ENCODE measurements at regions of chr19 and their contacts with region 1.

Region 1: GRCh38 chr19:38657633-38658222 is 10.3 kb downstream of the ACTN4 start:
- DNase-seq: no peak
- ATAC-seq: no peak
- H3K4me3 Mint-ChIP-seq: peak overlapping the region; percentile 11
- H3K27ac Mint-ChIP-seq: no peak overlapping the region
- H3K4me1 Mint-ChIP-seq: peaks cover 58% of the 10 kb centered on the region
- H3K27me3 Mint-ChIP-seq: no peaks in the 10 kb centered on the region

Region 2: GRCh38 chr19:38496603-38497487 is 160.9 kb before region 1 on chr19:
- POLR2A ChIA-PET with region 1: no interaction called
- DNase-seq: no peak
- ATAC-seq: no peak
- H3K4me3 Mint-ChIP-seq: no peak overlapping the region
- H3K27ac Mint-ChIP-seq: no peak overlapping the region
- H3K4me1 Mint-ChIP-seq: peaks cover 9% of the 10 kb centered on the region
- H3K27me3 Mint-ChIP-seq: peaks cover 20% of the 10 kb centered on the region

Region 3: GRCh38 chr19:38647368-38647965 is 10.3 kb before region 1 on chr19 and contains the start of gene ACTN4:
- POLR2A ChIA-PET with region 1: interaction called, 10 read pairs
- DNase-seq: peak; percentile 100
- ATAC-seq: peak; percentile 93
- H3K4me3 Mint-ChIP-seq: peak within 1 kb of the TSS; percentile 94
- H3K27ac Mint-ChIP-seq: peak within 1 kb of the TSS; percentile 87
- H3K4me1 Mint-ChIP-seq: peaks cover 28% of the 10 kb centered on the region
- H3K27me3 Mint-ChIP-seq: peaks cover 1% of the 10 kb centered on the region
- total RNA-seq, gene ACTN4: 236 to 252 TPM

Region 4: GRCh38 chr19:38669552-38669951 is 11.8 kb after region 1 on chr19:
- POLR2A ChIA-PET with region 1: interaction called, 10 read pairs
- DNase-seq: no peak
- ATAC-seq: peak; percentile 15
- H3K4me3 Mint-ChIP-seq: peak overlapping the region; percentile 49
- H3K27ac Mint-ChIP-seq: peak overlapping the region; percentile 44
- H3K4me1 Mint-ChIP-seq: peaks cover 50% of the 10 kb centered on the region
- H3K27me3 Mint-ChIP-seq: no peaks in the 10 kb centered on the region

Region 5: DNA sequence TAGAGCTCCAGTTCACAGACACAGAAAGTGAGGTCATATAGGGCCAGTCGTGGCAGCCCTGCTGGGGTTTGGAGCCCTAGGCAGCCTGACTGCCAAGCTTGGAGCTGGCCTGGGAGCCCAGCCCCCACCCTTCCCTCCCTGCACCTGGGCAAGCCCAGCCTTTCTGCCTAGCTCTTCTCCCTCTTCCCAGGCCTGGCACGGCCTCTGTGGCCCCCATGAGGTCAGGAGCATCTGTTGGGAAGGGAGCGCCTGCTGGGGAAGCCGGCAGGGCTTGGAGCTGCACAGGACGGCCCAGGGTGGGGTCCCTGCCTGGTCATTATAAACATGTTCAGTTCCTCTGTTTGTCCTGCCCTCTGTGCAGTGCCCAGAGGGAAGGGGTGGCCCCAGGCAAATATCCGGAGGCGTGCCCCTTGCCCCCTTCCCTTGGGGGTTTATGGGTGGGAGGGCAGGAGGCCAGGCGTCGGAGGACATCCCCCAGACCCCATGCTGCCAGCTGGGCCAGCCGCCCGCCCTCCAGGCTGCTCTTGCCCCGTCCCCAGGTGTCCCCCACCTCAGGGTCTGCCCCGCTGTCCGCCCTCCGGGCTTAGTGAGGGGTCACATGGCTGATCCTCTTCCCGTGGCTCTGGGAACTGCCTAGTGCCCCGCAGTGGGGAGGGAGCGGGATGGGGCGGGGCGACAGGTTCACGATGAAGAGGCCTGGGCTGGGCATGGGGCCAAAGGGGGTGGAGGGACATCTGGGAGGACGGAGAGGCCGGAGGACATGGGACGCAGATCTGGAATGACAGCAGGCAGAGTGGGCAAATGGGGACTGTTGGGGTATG is 509.1 kb after region 1 on chr19:
- POLR2A ChIA-PET with region 1: no interaction called
- DNase-seq: no peak
- ATAC-seq: no peak
- H3K4me3 Mint-ChIP-seq: no peak overlapping the region
- H3K27ac Mint-ChIP-seq: no peak overlapping the region
- H3K4me1 Mint-ChIP-seq: peaks cover 5% of the 10 kb centered on the region
- H3K27me3 Mint-ChIP-seq: no peaks in the 10 kb centered on the region